Heart right ventricle (tissue), 16 donors: ENCODE measurements at regions of chr14 and their contacts with region 1.

Region 1: DNA sequence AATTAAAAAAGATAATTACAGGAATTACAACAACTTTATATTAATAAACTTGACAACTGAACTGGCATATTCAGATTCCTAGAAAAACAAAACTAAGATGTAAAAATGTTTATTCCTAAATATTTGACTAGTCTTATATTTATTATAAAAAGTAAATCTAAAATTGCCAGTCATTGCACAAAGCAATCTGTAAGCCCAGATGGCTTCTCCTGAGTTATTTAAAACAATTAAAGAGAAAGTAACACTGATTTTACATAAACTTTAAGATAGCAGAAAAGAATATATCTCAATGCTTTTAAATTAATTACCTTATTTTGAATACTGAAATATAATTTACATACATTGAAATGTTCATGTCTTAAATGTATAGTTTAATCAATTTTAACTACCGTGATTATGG is 434.1 kb upstream of the RPL10L start:
- DNase-seq: no peak
- ATAC-seq: no peak
- H3K4me3 ChIP-seq: no peak overlapping the region
- H3K27ac ChIP-seq: no peak overlapping the region
- H3K4me1 ChIP-seq: no peaks in the 10 kb centered on the region
- H3K27me3 ChIP-seq: no peaks in the 10 kb centered on the region
- CTCF ChIP-seq: no peak

Region 2: GRCh38 chr14:46940611-46941010 is 145.1 kb before region 1 on chr14:
- intact Hi-C with region 1: no loop called
- DNase-seq: no peak
- ATAC-seq: no peak
- H3K4me3 ChIP-seq: no peak overlapping the region
- H3K27ac ChIP-seq: no peak overlapping the region
- H3K4me1 ChIP-seq: no peaks in the 10 kb centered on the region
- H3K27me3 ChIP-seq: no peaks in the 10 kb centered on the region
- CTCF ChIP-seq: no peak

Region 3: DNA sequence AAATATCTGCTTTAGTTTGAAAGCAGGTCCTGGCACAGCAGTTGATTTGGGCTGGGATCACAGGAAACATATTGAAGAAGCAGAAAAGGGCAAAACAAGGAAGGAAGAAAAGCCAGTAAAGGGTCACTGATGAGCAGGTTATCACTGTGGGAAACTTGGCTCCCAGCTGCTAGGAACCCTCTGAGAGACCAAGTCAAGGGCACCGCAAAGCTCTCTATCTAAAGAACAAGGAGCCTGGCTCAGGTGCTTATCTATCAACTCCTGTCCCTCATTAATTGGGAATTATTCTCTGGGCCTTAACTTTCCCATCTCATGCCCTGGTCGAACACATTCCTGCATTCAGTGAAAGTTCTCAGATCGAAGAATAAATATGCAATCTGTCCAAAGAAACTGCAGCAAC is 16.8 kb after region 1 on chr14:
- intact Hi-C with region 1: loop called in 1 of 10 experiments (anchors 1 kb)
- DNase-seq: no peak
- ATAC-seq: no peak
- H3K4me3 ChIP-seq: no peak overlapping the region
- H3K27ac ChIP-seq: no peak overlapping the region
- H3K4me1 ChIP-seq: no peaks in the 10 kb centered on the region
- H3K27me3 ChIP-seq: no peaks in the 10 kb centered on the region
- CTCF ChIP-seq: no peak